Heart right ventricle (tissue), 16 donors: ENCODE measurements at regions of chr7 and their contacts with region 1.

Region 1: GRCh38 chr7:127708788-127709187 is 56.8 kb downstream of the SND1 start:
- DNase-seq: peak in 1 of 2 donors; percentile 81
- ATAC-seq: peak; percentile 71 to 89 (median 80)
- H3K4me3 ChIP-seq: no peak overlapping the region
- H3K27ac ChIP-seq: no peak overlapping the region
- H3K4me1 ChIP-seq: peaks cover 0 to 8% (median 0%) of the 10 kb centered on the region in 9 donors
- H3K27me3 ChIP-seq: no peaks in the 10 kb centered on the region
- CTCF ChIP-seq: peak; percentile 59 to 88 (median 80)

Region 2: GRCh38 chr7:128020159-128020558 is 311.4 kb after region 1 on chr7:
- intact Hi-C with region 1: loop called in 1 of 10 experiments (anchors 10 kb)
- DNase-seq: no peak
- ATAC-seq: no peak
- H3K4me3 ChIP-seq: no peak overlapping the region
- H3K27ac ChIP-seq: no peak overlapping the region
- H3K4me1 ChIP-seq: peaks cover 0 to 39% (median 4%) of the 10 kb centered on the region in 9 donors
- H3K27me3 ChIP-seq: no peaks in the 10 kb centered on the region
- CTCF ChIP-seq: peak in 3 of 9 donors; percentile 7 to 39 (median 17)

Region 3: DNA sequence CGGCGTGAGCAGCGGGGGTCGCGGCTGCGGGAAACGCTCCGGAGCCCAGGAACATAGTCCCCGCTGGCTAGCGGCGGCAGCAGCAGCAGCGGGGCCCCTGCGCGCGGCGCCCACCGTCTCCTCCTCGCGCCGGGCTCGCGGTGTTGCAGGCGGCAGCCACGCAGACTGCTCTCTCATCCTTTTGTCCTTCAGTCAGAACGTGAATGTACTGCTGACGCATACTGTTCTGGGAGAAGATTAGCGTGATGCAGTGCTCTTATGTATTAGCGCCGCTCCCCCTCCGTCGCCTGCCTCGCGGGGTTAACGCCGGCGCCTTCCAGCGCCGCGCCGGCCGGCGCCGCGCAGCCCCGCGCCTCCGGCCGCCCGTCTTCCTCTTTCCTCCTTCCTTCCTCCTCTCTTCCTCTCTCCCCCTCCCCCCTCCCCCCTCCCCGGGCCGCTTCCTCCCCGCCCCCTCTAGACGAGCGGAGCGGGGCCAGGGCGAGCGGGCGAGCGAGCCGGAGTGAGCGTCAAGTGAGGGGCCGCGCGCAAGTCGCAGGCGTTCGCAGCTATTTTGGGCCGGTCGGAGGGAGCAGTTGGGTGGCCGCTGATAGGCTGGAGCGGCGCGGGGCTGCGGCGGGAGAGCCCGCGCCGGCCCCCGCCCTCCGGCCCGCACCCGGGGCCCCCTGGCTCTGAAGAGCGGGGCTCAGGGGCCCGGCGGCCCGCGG is 323.3 kb after region 1 on chr7:
- intact Hi-C with region 1: loop called in 6 of 10 experiments (anchors 5 to 10 kb)
- DNase-seq: peak; percentile 51
- ATAC-seq: peak; percentile 59 to 84 (median 68)
- H3K4me3 ChIP-seq: peak overlapping the region; percentile 25 to 71 (median 60)
- H3K27ac ChIP-seq: peak overlapping the region in 7 of 10 donors; percentile 30 to 77 (median 50)
- H3K4me1 ChIP-seq: peaks cover 3 to 32% (median 18%) of the 10 kb centered on the region in 9 donors
- H3K27me3 ChIP-seq: no peaks in the 10 kb centered on the region
- CTCF ChIP-seq: peak in 5 of 9 donors; percentile 10 to 46 (median 45)

Region 4: GRCh38 chr7:128135515-128136214 is 426.9 kb after region 1 on chr7:
- intact Hi-C with region 1: loop called in 3 of 10 experiments (anchors 5 to 10 kb)
- DNase-seq: peak; percentile 34 to 51
- ATAC-seq: peak; percentile 83 to 96 (median 90)
- H3K4me3 ChIP-seq: peak overlapping the region; percentile 9 to 66 (median 59)
- H3K27ac ChIP-seq: no peak overlapping the region
- H3K4me1 ChIP-seq: peaks cover 4 to 39% (median 15%) of the 10 kb centered on the region in 9 donors
- H3K27me3 ChIP-seq: peaks cover 0 to 80% (median 55%) of the 10 kb centered on the region in 7 donors
- CTCF ChIP-seq: peak; percentile 71 to 100 (median 93)

Region 5: GRCh38 chr7:128322040-128322643 is 613.4 kb after region 1 on chr7:
- intact Hi-C with region 1: loop called in 1 of 10 experiments (anchors 5 kb)
- DNase-seq: no peak
- ATAC-seq: peak in 6 of 8 donors; percentile 24 to 68 (median 36)
- H3K4me3 ChIP-seq: no peak overlapping the region
- H3K27ac ChIP-seq: peak overlapping the region in 9 of 10 donors; percentile 1 to 86 (median 75)
- H3K4me1 ChIP-seq: peaks cover 0 to 31% (median 10%) of the 10 kb centered on the region in 9 donors
- H3K27me3 ChIP-seq: no peaks in the 10 kb centered on the region
- CTCF ChIP-seq: peak in 6 of 9 donors; percentile 25 to 52 (median 44)

Region 6: GRCh38 chr7:128455551-128456254 is 746.9 kb after region 1 on chr7 and contains the start of gene HILPDA:
- intact Hi-C with region 1: no loop called
- DNase-seq: peak; percentile 92 to 96
- ATAC-seq: peak; percentile 93 to 97 (median 96)
- H3K4me3 ChIP-seq: peak within 1 kb of the TSS; percentile 69 to 97 (median 84)
- H3K27ac ChIP-seq: peak within 1 kb of the TSS; percentile 86 to 98 (median 94)
- H3K4me1 ChIP-seq: peaks cover 9 to 62% (median 41%) of the 10 kb centered on the region in 9 donors
- H3K27me3 ChIP-seq: no peaks in the 10 kb centered on the region
- CTCF ChIP-seq: no peak
- total RNA-seq, gene HILPDA: 4.5 to 65.0 (median 6.7) TPM